ENCODE measurements at regions of chr9 and their contacts with region 1.

Region 1: DNA sequence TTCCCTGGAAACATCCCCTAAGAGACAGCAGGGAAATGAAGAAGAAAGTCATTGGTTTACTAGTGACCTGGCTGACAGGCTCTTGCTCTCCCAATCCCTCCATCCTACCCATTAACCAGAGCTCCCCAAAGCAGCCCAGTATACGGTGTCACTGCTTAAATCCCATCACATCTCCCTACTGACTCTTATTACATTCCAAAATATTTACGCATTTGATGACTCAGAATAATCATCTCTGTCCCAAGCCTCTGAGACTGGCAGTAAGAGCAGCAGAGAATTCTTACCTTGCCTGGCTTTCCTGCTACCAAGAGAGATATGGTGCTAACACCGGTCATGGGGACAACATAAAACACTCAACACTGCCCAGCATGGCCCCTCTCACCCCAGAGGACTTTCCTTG is 20.2 kb upstream of the WHRN start:
- DNase-seq: no peak
- CTCF ChIP-seq: no peak

Region 2: DNA sequence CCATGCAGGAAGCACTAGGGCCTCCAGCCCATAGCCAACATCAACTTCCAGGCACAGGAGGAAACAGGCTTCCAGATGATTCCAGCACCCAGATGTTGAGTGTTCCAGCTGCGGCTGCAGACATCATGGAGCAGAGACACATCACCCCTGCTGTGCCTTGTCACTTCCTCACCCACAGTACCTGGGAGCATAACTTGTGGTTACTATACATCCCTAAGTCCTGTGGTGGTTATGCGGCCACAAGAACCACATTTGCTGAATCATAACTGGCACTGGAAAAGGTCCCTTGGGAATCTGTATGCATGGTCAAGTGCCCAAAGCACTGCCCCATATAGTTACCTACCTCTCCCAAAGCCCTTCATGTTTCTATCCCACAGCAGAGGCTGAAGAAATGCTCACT is 76.8 kb before region 1 on chr9:
- CTCF ChIA-PET with region 1: no interaction called
- POLR2A ChIA-PET with region 1: no interaction called
- DNase-seq: peak; percentile 5
- CTCF ChIP-seq: no peak

Region 3: GRCh38 chr9:114538241-114538640 is 12.7 kb after region 1 on chr9:
- CTCF ChIA-PET with region 1: interaction called, 14 read pairs
- POLR2A ChIA-PET with region 1: no interaction called
- DNase-seq: no peak
- CTCF ChIP-seq: peak; percentile 36